Activated naive CD4-positive, alpha-beta T cell treated with anti-CD3 and anti-CD28 coated beads for 36 hours (primary cell): ENCODE measurements at regions of chr17 and their contacts with region 1.

Region 1: GRCh38 chr17:13337864-13338371 is 263.8 kb downstream of the HS3ST3A1 start:
- DNase-seq: peak; percentile 43
- H3K4me3 Mint-ChIP-seq: peak overlapping the region; percentile 8
- H3K27ac Mint-ChIP-seq: no peak overlapping the region
- H3K4me1 Mint-ChIP-seq: peaks cover 6% of the 10 kb centered on the region
- H3K27me3 Mint-ChIP-seq: peaks cover 34% of the 10 kb centered on the region

Region 2: GRCh38 chr17:13362341-13363122 is 24.6 kb after region 1 on chr17:
- CTCF ChIA-PET with region 1: no interaction called
- intact Hi-C with region 1: no loop called
- DNase-seq: no peak
- H3K4me3 Mint-ChIP-seq: no peak overlapping the region
- H3K27ac Mint-ChIP-seq: no peak overlapping the region
- H3K4me1 Mint-ChIP-seq: no peaks in the 10 kb centered on the region
- H3K27me3 Mint-ChIP-seq: peaks cover 3% of the 10 kb centered on the region

Region 3: DNA sequence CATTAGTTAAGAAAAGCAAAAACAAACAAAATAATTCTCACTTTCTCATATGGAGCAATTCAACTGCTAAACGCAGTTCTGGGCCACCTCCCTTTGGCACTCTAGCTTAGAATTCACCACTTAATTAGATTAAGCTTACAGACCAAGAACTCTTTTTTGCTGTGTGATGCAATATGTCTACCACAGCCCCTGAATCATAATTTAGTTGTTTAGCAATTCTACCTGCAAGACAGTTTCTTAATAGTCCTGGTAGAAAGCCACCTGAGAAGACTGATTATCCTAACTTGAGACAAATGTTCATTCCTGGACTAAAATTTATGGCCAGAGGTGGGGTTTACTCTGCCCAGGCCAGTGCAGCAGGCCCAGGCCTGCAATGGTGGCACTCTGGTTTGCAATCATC is 57.9 kb after region 1 on chr17:
- CTCF ChIA-PET with region 1: no interaction called
- intact Hi-C with region 1: no loop called
- DNase-seq: no peak
- H3K4me3 Mint-ChIP-seq: no peak overlapping the region
- H3K27ac Mint-ChIP-seq: no peak overlapping the region
- H3K4me1 Mint-ChIP-seq: no peaks in the 10 kb centered on the region
- H3K27me3 Mint-ChIP-seq: peaks cover 2% of the 10 kb centered on the region

Region 4: GRCh38 chr17:14926526-14927122 is 1588.7 kb after region 1 on chr17:
- CTCF ChIA-PET with region 1: interaction called, 3 read pairs
- intact Hi-C with region 1: loop called (anchors 5 kb)
- DNase-seq: peak; percentile 72
- H3K4me3 Mint-ChIP-seq: no peak overlapping the region
- H3K27ac Mint-ChIP-seq: no peak overlapping the region
- H3K4me1 Mint-ChIP-seq: no peaks in the 10 kb centered on the region
- H3K27me3 Mint-ChIP-seq: peaks cover 10% of the 10 kb centered on the region

Region 5: DNA sequence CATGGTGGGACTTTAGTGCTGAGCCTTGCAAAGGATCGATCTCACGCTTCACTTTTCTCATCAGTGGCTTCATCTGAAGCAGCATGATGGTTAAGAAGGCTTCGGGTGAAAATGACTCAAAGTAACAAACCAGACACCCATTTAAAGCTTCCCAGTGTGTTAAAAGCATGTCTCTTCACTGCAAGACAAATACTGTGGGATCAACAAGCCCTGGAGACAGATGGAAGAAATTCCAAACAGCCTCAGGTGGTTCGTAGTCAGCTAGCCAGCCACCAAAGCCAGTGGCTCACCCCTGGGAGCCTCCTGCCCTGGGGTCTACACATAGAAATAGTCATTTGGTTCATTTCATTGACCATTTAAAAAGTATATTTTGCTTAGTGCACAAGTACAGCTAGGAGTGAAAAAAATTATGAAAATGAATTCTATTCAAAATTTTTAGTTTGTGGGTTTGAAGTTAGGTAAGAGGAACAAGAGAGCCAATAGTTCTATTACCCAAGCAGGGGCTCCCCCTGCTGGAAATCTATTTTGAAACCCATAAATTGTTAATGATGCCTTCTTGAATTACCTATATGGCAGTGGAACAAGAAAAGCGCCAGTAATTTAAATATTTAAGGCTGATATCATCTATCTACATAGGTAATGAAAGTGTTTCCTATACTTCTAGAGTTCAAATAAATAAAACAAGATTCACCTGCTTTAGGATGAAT is 1875.6 kb after region 1 on chr17:
- CTCF ChIA-PET with region 1: no interaction called
- intact Hi-C with region 1: loop called (anchors 5 kb)
- DNase-seq: peak; percentile 18
- H3K4me3 Mint-ChIP-seq: no peak overlapping the region
- H3K27ac Mint-ChIP-seq: no peak overlapping the region
- H3K4me1 Mint-ChIP-seq: no peaks in the 10 kb centered on the region
- H3K27me3 Mint-ChIP-seq: peaks cover 7% of the 10 kb centered on the region